PC-3 (cell line): ENCODE measurements at regions of chr5 and their contacts with region 1.

Region 1: GRCh38 chr5:78689540-78690252 is 41.1 kb upstream of the LHFPL2 start:
- DNase-seq: no peak
- ATAC-seq: no peak
- H3K4me3 ChIP-seq: no peak overlapping the region
- H3K27ac ChIP-seq: no peak overlapping the region
- H3K4me1 ChIP-seq: no peaks in the 10 kb centered on the region
- H3K27me3 ChIP-seq: no peaks in the 10 kb centered on the region
- CTCF ChIP-seq: no peak

Region 2: DNA sequence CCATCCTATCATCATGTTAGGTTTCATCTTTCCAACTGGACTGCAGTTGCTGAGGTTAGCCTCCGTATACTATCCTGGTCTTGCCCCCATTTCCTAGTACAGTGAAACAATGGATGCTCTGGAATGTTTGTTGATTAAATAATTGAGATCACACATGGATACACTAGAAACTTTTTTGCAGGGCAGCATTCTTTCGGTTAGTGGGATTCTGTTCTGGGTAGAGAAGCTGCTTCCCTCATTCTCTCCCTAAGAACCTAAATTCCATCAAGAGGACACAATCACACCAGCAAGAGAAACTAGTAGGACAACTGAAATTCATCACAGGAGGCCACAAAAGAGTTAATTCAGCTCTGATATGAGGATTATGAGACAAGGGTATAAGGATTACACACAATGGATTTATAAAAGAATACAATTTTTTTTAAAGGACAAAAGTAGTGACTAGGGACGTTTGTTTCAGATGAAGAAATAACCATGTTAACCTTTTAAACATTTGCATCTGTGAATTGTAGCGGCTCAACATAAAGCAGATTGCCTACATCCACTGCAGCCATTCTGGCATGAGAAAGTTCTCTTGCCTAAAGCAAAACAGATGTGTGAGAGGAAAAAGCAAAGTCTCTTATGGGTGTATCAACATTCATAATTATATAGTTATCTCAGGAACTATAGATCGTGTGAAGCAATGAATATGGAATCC is 121.6 kb after region 1 on chr5:
- CTCF ChIA-PET with region 1: no interaction called
- POLR2A ChIA-PET with region 1: interaction called, 25 read pairs
- intact Hi-C with region 1: no loop called
- DNase-seq: no peak
- ATAC-seq: no peak
- H3K4me3 ChIP-seq: no peak overlapping the region
- H3K27ac ChIP-seq: no peak overlapping the region
- H3K4me1 ChIP-seq: peaks cover 11% of the 10 kb centered on the region
- H3K27me3 ChIP-seq: no peaks in the 10 kb centered on the region
- CTCF ChIP-seq: no peak

Region 3: DNA sequence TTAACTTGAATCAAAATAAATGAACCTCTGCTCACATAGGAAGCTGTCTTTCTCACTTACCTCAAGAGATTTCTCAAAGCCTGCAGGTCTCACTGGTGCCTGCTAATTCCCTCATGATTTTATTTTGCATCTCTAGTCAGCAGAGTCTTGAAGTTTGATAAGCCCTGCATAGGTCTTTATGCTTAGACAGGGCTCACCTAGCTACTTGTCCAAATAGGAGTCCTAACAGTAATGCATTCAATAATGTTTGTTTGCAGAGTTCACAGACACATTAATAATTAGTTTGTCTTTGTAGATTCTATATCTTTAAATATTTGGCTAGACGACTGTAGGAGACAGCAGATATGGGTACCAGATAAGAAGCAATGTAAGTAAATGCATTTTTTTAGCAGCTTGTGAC is 246.9 kb after region 1 on chr5:
- CTCF ChIA-PET with region 1: no interaction called
- POLR2A ChIA-PET with region 1: no interaction called
- intact Hi-C with region 1: no loop called
- DNase-seq: no peak
- ATAC-seq: no peak
- H3K4me3 ChIP-seq: no peak overlapping the region
- H3K27ac ChIP-seq: no peak overlapping the region
- H3K4me1 ChIP-seq: no peaks in the 10 kb centered on the region
- H3K27me3 ChIP-seq: no peaks in the 10 kb centered on the region
- CTCF ChIP-seq: no peak